Left lung (tissue), 14 donors: ENCODE measurements at regions of chr10 and their contacts with region 1.

Region 1: GRCh38 chr10:36779234-36779846 is 346.1 kb upstream of the ANKRD30A start:
- DNase-seq: peak in 2 of 4 donors; percentile 60 to 76
- ATAC-seq: peak; percentile 99
- H3K4me3 ChIP-seq: no peak overlapping the region
- H3K27ac ChIP-seq: no peak overlapping the region
- H3K4me1 ChIP-seq: no peaks in the 10 kb centered on the region
- H3K27me3 ChIP-seq: no peaks in the 10 kb centered on the region
- CTCF ChIP-seq: peak; percentile 60 to 80

Region 2: DNA sequence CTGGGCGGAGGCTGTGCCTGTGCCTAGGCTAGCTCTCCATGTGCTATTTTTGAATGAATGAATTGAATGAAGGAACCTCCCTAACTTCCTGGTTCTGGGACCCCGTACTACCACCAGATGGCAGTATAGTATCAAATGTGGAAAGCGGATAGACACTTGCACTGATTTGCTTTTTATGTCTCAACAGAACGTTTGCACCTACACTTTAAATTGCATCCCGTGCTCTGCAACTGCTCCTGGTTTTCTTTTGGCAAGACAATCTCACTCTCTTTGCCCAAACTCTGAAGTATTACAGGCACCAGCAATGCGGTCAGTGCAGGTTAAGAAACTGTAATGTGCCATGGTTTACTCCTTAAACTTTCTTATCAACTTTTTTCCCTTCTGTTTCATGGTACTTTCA is 1143.8 kb before region 1 on chr10:
- intact Hi-C with region 1: loop called in 1 of 2 experiments (anchors 10 kb)
- DNase-seq: peak in 1 of 4 donors; percentile 67
- ATAC-seq: peak; percentile 81
- H3K4me3 ChIP-seq: no peak overlapping the region
- H3K27ac ChIP-seq: no peak overlapping the region
- H3K4me1 ChIP-seq: peaks cover 0 to 17% of the 10 kb centered on the region in 2 donors
- H3K27me3 ChIP-seq: peaks cover 0 to 41% of the 10 kb centered on the region in 2 donors
- CTCF ChIP-seq: peak; percentile 85 to 88